Panc1 (cell line): ENCODE measurements at regions of chr11 and their contacts with region 1.

Region 1: DNA sequence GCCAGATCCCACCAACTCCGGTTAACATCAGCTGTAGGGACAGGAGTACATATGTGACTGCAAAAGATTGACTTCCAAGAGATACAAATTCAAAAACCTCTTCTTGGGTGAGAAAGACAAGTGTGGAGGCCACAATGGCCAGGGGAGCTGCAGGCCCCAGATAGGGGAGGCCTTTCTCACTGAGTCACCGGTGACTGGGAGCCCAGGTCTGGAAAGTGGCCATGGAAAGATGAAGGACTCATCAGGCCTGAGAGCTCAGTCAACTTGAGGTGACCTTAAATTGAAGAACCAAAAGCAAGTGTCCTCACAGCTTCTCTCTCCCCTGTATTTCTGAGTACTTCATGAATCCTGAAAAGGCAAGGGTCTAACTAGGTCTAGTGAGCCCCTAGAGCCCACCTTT is 90.4 kb upstream of the CLPB start:
- DNase-seq: no peak
- ATAC-seq: no peak
- H3K4me3 ChIP-seq: no peak overlapping the region
- H3K27ac ChIP-seq: no peak overlapping the region
- H3K4me1 ChIP-seq: no peaks in the 10 kb centered on the region
- H3K27me3 ChIP-seq: no peaks in the 10 kb centered on the region; the same call in 1 of the 2 replicates
- CTCF ChIP-seq: no peak

Region 2: GRCh38 chr11:72493426-72494108 is 31.1 kb before region 1 on chr11:
- CTCF ChIA-PET with region 1: no interaction called
- POLR2A ChIA-PET with region 1: no interaction called
- in situ Hi-C with region 1: no loop called
- intact Hi-C with region 1: no loop called
- DNase-seq: no peak
- ATAC-seq: no peak
- H3K4me3 ChIP-seq: no peak overlapping the region
- H3K27ac ChIP-seq: no peak overlapping the region
- H3K4me1 ChIP-seq: no peaks in the 10 kb centered on the region
- H3K27me3 ChIP-seq: peaks cover 13% of the 10 kb centered on the region
- CTCF ChIP-seq: no peak

Region 3: DNA sequence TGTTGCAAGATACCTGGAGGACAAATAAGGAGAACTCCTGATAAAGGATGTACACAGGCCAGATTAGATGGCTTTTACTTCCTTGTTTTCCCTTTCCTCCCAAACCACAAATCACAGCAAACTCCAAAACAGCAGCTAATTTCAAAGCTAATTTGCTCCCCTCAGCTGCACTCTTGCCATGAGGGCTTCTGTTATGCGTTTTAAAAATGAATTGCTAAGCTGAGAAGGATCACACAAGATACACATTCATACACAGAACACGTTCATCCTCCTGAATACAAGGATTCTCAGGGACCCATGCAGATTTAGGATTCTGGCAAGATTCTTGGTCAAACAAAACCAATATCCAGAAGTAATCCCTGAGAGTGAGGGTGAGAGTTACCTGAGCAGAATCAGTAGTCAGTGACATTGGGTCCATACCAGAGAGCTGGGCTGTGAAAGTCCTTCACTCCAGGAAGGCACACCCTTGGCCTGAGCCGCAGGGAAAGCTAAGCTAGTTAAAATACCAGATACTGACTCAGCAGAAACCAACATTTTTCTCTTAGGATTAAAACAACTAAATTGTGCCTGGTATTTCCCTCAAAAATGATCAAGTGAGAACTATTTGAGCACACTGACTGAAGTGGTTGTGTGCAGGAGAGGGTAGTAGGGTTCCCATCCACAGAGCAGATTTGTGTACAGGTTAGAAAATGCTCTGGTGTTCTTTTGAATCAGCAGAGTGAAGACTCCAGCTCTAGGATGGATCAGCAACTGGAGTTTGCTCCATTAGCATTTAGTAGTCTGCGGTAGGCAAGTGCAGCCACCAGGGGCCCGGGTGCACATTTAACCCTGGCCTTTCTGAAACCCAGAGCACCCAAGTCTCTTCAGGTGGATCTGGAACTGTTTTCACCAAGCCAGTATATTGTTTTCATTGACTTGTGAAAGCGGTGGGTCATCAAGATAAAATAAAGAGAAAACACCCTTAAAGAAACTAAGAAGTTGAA is 10.1 kb after region 1 on chr11:
- CTCF ChIA-PET with region 1: no interaction called
- POLR2A ChIA-PET with region 1: interaction called, 15 read pairs
- in situ Hi-C with region 1: no loop called
- intact Hi-C with region 1: no loop called
- DNase-seq: no peak
- ATAC-seq: peak; percentile 66; the same call in 1 of the 2 replicates
- H3K4me3 ChIP-seq: no peak overlapping the region
- H3K27ac ChIP-seq: no peak overlapping the region
- H3K4me1 ChIP-seq: no peaks in the 10 kb centered on the region
- H3K27me3 ChIP-seq: peaks cover 24% of the 10 kb centered on the region
- CTCF ChIP-seq: no peak

Region 4: GRCh38 chr11:72553706-72554105 is 29.0 kb after region 1 on chr11:
- CTCF ChIA-PET with region 1: no interaction called
- POLR2A ChIA-PET with region 1: no interaction called
- in situ Hi-C with region 1: loop called (anchors 5 kb)
- intact Hi-C with region 1: no loop called
- DNase-seq: no peak
- ATAC-seq: no peak
- H3K4me3 ChIP-seq: no peak overlapping the region
- H3K27ac ChIP-seq: no peak overlapping the region
- H3K4me1 ChIP-seq: no peaks in the 10 kb centered on the region
- H3K27me3 ChIP-seq: peaks cover 21% of the 10 kb centered on the region
- CTCF ChIP-seq: no peak; the same call in 1 of the 2 replicates